MCF 10A (cell line): ENCODE measurements at regions of chr21 and their contacts with region 1.

Region 1: DNA sequence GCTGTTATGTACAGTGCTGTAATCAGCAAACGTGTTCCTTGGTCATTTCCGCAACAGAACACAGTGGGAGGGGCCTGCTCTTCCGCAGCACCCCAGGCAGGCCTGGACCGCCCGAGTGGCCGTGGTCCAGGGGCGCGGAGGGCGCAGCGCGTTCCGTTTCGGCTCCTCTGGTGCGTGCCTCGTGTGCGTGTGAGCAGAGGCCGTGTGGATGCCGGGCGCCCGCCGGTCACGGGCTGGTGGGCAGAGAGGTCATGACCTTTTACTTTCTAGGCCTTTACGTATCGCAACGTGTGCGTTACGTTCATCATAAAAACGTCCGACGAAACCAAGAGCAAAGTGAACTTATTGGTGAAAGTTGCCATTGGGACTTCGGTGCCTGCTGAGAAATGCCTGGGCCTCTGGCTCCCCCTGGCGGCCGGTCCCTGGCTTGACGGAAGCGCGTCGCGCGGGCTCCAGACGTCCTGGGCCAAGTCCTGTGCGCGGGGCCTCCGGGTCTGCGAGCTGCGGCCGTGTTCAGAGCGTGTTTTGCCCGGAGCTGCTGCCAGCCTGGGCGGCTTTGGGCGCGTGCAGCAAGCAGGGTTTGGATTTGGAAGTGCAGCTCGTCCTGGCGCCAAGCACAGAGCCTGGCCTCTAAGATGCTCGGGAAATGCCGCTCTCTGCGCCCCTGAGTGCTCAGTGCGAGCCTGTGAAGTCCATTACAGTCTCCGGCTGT is 34.4 kb downstream of the COL18A1 start:
- DNase-seq: peak; percentile 68
- H3K4me3 Mint-ChIP-seq: no peak overlapping the region
- H3K27ac Mint-ChIP-seq: no peak overlapping the region
- H3K4me1 Mint-ChIP-seq: no peaks in the 10 kb centered on the region
- H3K27me3 Mint-ChIP-seq: peaks cover 7% of the 10 kb centered on the region
- CTCF ChIP-seq: peak; percentile 93

Region 2: DNA sequence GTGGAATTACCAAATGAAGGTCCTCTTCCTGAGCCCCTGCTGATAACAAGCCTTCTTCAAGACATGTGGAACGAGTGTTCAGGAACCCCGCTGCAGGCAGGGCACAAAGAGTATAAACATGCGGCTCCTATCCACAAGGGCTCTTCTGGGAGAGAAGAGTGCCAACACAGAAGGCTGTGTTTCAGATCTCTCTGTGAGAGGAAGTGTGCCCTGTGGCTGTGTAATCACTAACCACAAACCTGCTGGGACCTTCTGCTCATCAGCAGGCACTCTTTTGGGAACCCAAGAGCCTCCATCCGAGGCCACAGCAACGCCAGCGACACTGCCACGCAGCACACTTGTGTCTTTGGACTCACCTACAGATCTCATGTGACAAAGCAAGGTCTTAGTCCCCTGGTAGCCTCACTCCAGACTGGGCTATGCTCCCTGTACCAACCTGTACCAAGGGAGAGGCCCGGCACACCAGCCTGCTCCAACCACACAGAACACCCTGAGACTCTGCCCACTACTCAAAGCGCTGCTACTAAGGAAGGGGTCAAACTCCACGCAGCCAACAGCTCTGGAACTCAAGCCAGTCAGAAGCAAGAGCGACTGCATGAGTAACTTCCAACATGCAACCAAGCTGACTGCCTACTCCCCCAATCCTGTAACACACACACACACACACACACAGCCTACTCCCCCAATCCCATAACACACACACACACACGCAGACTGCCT is 573.6 kb before region 1 on chr21:
- CTCF ChIA-PET with region 1: no interaction called
- POLR2A ChIA-PET with region 1: no interaction called
- intact Hi-C with region 1: no loop called
- DNase-seq: no peak
- H3K4me3 Mint-ChIP-seq: no peak overlapping the region
- H3K27ac Mint-ChIP-seq: peak overlapping the region; percentile 20
- H3K4me1 Mint-ChIP-seq: peaks cover 49% of the 10 kb centered on the region
- H3K27me3 Mint-ChIP-seq: no peaks in the 10 kb centered on the region
- CTCF ChIP-seq: no peak

Region 3: GRCh38 chr21:45287438-45288391 is 151.6 kb before region 1 on chr21 and contains the start of gene POFUT2:
- CTCF ChIA-PET with region 1: interaction called, 26 read pairs
- POLR2A ChIA-PET with region 1: no interaction called
- intact Hi-C with region 1: loop called (anchors 1 kb)
- DNase-seq: peak; percentile 95
- H3K4me3 Mint-ChIP-seq: peak within 1 kb of the TSS; percentile 74
- H3K27ac Mint-ChIP-seq: peak within 1 kb of the TSS; percentile 31
- H3K4me1 Mint-ChIP-seq: peaks cover 9% of the 10 kb centered on the region
- H3K27me3 Mint-ChIP-seq: no peaks in the 10 kb centered on the region
- CTCF ChIP-seq: no peak
- total RNA-seq, gene POFUT2: 25.2 and 31.3 TPM in 2 replicates

Region 4: DNA sequence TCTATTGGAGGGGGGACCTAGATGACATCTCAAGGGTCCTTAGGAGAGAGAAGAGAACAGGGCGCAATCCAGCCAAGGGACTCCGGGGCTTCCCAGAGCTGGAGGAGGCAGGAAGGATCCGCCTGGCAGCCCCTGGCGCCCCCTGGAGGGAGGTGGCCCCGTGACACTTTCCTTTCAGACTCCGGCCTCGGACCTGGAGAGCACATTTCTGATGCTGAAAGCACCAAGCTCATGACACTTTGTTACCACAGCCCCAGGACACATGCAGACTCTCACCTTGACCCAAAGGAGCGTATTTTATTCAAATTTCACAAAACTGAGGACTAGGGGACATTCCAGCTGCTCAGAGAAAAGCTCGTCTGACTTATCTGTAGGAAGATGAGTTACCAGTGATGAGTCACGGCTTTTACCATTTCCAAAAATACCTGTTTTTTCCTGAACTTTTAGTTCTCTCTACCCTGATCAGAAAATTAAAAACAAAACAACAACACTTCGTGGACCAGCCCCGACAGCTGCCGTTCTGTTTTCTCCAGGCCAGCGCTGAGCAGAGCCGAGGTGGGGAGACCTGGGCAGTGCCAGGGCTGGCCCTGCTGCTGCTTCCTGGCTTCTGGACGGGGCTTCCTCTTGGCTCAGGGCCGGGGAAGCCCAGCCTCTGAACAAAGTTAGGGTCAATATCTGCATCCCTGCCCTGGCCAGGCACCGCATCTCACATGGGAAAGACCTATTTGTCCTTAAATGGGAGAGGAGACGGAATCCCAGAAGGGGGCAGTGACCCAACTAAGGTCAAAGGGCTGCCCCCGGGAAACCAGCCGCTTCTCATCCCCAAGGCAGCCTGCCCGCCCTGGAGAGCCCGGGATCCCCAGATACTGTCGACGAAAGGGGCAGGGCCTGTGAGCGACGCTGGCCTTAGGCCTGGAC is 130.0 kb before region 1 on chr21:
- CTCF ChIA-PET with region 1: interaction called, 3 read pairs
- POLR2A ChIA-PET with region 1: no interaction called
- intact Hi-C with region 1: loop called (anchors 5 kb)
- DNase-seq: peak; percentile 61
- H3K4me3 Mint-ChIP-seq: no peak overlapping the region
- H3K27ac Mint-ChIP-seq: no peak overlapping the region
- H3K4me1 Mint-ChIP-seq: peaks cover 19% of the 10 kb centered on the region
- H3K27me3 Mint-ChIP-seq: peaks cover 45% of the 10 kb centered on the region
- CTCF ChIP-seq: peak; percentile 34

Region 5: GRCh38 chr21:45596704-45597318 is 157.5 kb after region 1 on chr21:
- CTCF ChIA-PET with region 1: no interaction called
- POLR2A ChIA-PET with region 1: no interaction called
- intact Hi-C with region 1: loop called (anchors 5 kb)
- DNase-seq: peak; percentile 69
- H3K4me3 Mint-ChIP-seq: no peak overlapping the region
- H3K27ac Mint-ChIP-seq: no peak overlapping the region
- H3K4me1 Mint-ChIP-seq: no peaks in the 10 kb centered on the region
- H3K27me3 Mint-ChIP-seq: peaks cover 45% of the 10 kb centered on the region
- CTCF ChIP-seq: peak; percentile 92